WTC11 (cell line): ENCODE measurements at regions of chr19 and their contacts with region 1.

Region 1: DNA sequence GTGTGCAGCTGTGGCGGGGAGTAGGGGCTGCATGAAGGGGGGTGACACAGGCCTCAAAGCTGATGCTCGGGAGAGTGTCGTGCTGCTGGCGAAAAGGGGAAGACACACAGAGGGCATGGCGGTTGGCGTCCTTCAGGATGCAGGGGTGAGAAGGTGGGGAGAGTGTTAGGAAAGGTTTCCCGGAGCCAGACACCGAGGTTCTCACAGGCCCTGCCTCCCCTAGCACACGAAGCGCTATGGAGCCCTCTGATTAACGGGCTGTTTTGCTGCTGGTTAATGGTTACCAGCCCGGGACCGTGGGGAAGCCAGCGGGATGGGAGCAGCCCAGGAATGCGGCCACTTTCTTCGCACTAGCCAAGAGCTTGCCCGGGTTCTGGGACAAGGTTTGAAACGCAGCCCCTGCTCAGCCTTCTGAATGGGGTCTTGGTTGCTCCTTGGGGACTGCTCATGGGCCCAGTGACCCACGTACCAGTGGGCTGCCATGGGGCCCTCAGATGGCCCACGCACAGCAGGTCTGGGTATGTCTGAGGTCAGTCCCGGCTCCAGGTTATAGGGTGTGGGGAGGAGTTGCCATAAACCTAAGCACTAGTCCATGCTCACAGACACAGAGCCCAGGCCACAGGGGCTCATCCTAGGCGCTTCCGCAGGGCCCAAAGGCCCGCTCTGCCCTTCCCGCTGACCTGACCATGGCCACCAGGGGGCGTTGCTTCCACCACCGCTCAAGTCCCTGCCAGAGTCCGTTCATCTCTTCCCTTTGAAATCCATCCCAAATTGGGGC is 31.3 kb upstream of the ISYNA1 start:
- DNase-seq: peak; percentile 87
- ATAC-seq: peak; percentile 74
- H3K4me3 Mint-ChIP-seq: no peak overlapping the region
- H3K27ac Mint-ChIP-seq: no peak overlapping the region
- H3K4me1 Mint-ChIP-seq: peaks cover 9% of the 10 kb centered on the region
- H3K27me3 Mint-ChIP-seq: no peaks in the 10 kb centered on the region
- CTCF ChIP-seq: peak; percentile 88

Region 2: DNA sequence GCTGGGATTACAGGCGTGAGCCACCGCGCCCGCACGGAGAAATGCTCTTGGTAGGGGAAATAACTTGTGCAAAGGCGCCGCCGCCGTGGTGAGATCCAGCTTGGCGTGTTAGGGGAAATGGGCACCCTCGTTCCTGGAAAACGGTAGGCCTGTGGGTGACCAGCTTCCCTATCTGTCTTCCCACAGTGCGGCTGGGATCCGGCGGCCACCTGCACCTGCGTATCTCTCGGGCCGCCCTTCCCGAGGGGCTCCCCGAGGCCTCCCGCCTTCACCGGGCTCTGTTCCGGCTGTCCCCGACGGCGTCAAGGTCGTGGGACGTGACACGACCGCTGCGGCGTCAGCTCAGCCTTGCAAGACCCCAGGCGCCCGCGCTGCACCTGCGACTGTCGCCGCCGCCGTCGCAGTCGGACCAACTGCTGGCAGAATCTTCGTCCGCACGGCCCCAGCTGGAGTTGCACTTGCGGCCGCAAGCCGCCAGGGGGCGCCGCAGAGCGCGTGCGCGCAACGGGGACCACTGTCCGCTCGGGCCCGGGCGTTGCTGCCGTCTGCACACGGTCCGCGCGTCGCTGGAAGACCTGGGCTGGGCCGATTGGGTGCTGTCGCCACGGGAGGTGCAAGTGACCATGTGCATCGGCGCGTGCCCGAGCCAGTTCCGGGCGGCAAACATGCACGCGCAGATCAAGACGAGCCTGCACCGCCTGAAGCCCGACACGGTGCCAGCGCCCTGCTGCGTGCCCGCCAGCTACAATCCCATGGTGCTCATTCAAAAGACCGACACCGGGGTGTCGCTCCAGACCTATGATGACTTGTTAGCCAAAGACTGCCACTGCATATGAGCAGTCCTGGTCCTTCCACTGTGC is 80.9 kb before region 1 on chr19:
- CTCF ChIA-PET with region 1: no interaction called
- POLR2A ChIA-PET with region 1: no interaction called
- DNase-seq: peak; percentile 90
- ATAC-seq: peak; percentile 69
- H3K4me3 Mint-ChIP-seq: peak overlapping the region; percentile 73
- H3K27ac Mint-ChIP-seq: no peak overlapping the region
- H3K4me1 Mint-ChIP-seq: peaks cover 29% of the 10 kb centered on the region
- H3K27me3 Mint-ChIP-seq: peaks cover 32% of the 10 kb centered on the region
- CTCF ChIP-seq: peak; percentile 100

Region 3: GRCh38 chr19:18450931-18451845 is 18.1 kb before region 1 on chr19:
- CTCF ChIA-PET with region 1: interaction called, 11 read pairs
- POLR2A ChIA-PET with region 1: interaction called, 7 read pairs
- DNase-seq: peak; percentile 95
- ATAC-seq: peak; percentile 83
- H3K4me3 Mint-ChIP-seq: no peak overlapping the region
- H3K27ac Mint-ChIP-seq: no peak overlapping the region; the same call in 1 of the 2 replicates
- H3K4me1 Mint-ChIP-seq: peaks cover 3% of the 10 kb centered on the region; the same call in 1 of the 2 replicates
- H3K27me3 Mint-ChIP-seq: no peaks in the 10 kb centered on the region
- CTCF ChIP-seq: peak; percentile 98

Region 4: DNA sequence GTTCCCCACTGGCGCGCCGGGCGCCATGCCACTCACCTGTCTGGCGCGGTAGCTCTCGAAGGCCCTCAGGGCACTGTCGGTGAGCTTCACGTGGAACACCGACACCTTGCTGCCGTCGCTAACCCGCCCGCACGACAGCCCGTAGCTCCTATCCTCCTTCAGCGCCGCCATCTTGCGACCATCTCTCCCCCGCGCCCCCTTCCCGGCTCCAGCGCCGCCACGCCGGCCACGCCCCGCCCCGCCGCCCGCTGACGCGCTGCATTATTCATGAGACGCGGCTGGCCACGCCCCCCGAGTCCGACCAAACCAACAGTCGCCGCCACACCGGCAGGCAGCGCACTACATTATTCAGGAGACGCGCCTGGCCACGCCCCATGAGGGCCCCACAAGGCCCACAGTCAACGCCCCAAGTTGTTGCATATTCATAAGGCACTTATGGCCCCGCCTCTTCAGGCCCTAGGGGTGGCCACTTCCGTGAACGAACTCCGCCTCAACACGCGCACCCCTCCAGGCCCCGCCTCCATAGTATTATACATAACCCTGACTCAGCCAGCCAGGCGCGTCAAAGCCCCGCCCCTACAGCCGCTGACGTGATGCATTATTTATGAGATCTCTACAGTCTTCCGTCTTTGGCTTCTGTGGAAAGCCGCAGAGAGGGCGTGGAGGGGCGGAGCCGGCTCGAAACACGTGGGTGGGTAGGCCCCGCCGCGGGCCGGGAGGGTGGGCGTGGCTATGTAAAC is 52.8 kb after region 1 on chr19 and contains the start of gene ELL:
- CTCF ChIA-PET with region 1: interaction called, 18 read pairs
- POLR2A ChIA-PET with region 1: no interaction called
- DNase-seq: peak; percentile 100
- ATAC-seq: peak; percentile 95
- H3K4me3 Mint-ChIP-seq: peak within 1 kb of the TSS; percentile 81
- H3K27ac Mint-ChIP-seq: peak within 1 kb of the TSS; percentile 87
- H3K4me1 Mint-ChIP-seq: peaks cover 7% of the 10 kb centered on the region
- H3K27me3 Mint-ChIP-seq: no peaks in the 10 kb centered on the region
- CTCF ChIP-seq: no peak
- total RNA-seq, gene ELL: 11.6 to 17.3 TPM (median 13.1 TPM) in 3 replicates

Region 5: DNA sequence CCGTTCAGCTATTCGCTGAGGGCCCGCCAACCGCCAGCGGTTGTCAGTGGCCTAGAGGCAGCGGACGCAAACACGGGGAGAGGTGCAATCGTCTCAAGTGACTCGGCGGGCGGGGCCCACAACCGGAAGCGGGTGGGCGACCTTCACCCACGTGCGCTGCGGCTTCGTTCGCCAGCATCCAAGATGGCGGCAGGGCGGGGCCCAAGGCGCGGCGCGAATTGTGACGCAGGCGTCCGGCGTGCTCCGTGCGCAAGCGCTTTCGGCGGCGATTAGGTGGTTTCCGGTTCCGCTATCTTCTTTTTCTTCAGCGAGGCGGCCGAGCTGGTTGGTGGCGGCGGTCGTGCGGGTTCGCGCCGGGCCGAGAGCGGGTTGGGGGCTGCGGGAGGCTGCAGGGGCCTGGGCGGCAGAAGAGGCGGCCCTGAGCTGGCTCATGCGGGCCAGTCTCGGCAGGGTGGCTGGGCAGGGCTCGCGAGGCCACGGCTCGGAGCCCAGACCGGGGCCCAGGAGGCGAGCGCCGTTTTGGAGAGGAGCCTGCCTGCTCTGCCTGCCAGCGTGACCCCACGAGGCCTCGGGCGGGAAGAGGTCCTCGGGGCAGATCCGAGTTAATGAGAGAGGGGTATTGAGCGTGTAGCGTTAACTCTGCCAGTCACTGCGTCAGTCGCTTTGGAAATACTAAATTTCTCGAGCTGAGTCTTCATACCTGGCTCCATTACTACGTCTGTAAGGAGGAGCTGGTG is 102.5 kb after region 1 on chr19 and contains the start of gene UBA52:
- CTCF ChIA-PET with region 1: interaction called, 12 read pairs
- POLR2A ChIA-PET with region 1: no interaction called
- DNase-seq: peak; percentile 99
- ATAC-seq: peak; percentile 92
- H3K4me3 Mint-ChIP-seq: peak within 1 kb of the TSS; percentile 76
- H3K27ac Mint-ChIP-seq: peak within 1 kb of the TSS; percentile 98
- H3K4me1 Mint-ChIP-seq: peaks cover 16% of the 10 kb centered on the region
- H3K27me3 Mint-ChIP-seq: no peaks in the 10 kb centered on the region
- CTCF ChIP-seq: no peak
- total RNA-seq, gene UBA52: 1,300 to 1,361 TPM (median 1,328 TPM) in 3 replicates

Region 6: GRCh38 chr19:18594096-18594823 is 125.0 kb after region 1 on chr19:
- CTCF ChIA-PET with region 1: interaction called, 39 read pairs
- POLR2A ChIA-PET with region 1: interaction called, 3 read pairs
- DNase-seq: peak; percentile 82
- ATAC-seq: peak; percentile 34
- H3K4me3 Mint-ChIP-seq: peak overlapping the region; percentile 77
- H3K27ac Mint-ChIP-seq: peak overlapping the region; percentile 94
- H3K4me1 Mint-ChIP-seq: peaks cover 53% of the 10 kb centered on the region
- H3K27me3 Mint-ChIP-seq: peaks cover 4% of the 10 kb centered on the region
- CTCF ChIP-seq: peak; percentile 63

Region 7: DNA sequence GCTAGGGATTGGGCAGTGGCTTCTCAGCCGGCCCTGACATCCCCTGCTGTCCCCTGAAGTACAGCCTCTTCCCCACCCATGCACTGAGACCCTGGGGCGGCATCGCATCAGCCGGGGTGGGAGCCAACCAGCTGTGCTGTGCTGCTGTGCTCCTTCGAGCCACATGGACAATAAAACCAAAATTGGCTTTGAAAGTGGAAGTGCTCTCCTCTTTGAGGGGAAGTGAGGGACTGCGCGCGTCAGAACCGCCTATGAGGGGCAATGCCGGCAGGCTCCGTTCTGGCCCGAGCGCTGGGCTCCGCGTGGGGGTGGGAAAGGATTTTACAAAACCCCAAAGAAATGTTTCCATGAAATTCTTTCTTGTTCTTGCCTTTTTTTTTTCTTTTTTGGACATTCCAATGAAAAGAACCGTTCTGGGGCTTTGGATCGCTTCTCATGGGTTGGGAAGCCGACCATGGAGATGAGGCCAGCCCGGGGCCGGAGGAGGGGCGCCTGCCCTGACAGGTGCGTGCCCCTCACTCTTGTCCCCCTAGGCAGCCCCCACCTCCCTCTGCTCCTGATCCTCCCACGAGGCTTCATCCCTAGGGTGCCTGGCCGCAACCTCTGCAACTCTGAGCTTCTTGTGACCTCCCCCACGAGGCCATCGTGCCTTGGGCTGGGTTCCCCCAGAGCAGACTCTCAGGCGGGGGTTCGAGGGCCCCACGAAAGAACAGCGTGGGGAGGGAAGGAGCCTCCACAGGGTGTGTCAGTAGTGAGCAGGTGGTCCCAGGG is 190.2 kb after region 1 on chr19:
- CTCF ChIA-PET with region 1: no interaction called
- POLR2A ChIA-PET with region 1: no interaction called
- DNase-seq: no peak
- ATAC-seq: no peak
- H3K4me3 Mint-ChIP-seq: no peak overlapping the region
- H3K27ac Mint-ChIP-seq: peak overlapping the region; percentile 2; the same call in 1 of the 2 replicates
- H3K4me1 Mint-ChIP-seq: peaks cover 13% of the 10 kb centered on the region
- H3K27me3 Mint-ChIP-seq: no peaks in the 10 kb centered on the region
- CTCF ChIP-seq: no peak